ENCODE measurements at regions of chr5 and their contacts with region 1.

Region 1: DNA sequence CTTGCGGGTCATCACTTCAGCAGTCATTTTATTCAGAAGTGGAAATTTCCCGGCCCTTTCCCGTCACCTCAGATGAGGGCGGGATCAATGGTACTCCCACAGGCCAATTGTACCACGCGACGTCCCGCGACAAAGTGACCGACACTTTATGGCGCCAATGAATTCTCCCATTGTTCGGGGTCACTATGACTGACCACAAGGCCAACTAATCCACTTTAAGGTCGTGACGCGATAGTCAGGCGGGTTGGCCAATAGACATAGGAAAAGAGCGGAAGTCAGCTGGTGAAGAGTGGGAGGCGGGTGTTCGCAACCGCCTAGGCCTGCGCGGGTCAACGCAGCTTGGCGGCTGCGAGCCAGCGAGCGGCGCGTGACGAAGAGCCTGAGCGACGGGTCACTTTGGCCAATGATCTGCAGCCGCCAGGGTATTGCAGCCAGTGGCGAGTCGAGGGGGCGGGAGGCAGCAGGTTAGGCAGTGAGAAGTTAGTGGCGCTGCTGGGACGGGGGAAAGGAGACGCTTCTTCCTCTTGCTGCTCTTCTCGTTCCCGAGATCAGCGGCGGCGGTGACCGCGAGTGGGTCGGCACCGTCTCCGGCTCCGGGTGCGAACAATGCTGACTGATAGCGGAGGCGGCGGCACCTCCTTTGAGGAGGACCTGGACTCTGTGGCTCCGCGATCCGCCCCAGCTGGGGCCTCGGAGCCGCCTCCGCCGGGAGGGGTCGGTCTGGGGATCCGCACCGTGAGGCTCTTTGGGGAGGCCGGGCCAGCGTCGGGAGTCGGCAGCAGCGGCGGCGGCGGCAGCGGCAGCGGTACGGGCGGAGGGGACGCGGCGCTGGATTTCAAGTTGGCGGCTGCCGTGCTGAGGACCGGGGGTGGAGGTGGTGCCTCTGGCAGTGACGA is at the start of gene ANKHD1:
- DNase-seq: peak; percentile 90

Region 2: DNA sequence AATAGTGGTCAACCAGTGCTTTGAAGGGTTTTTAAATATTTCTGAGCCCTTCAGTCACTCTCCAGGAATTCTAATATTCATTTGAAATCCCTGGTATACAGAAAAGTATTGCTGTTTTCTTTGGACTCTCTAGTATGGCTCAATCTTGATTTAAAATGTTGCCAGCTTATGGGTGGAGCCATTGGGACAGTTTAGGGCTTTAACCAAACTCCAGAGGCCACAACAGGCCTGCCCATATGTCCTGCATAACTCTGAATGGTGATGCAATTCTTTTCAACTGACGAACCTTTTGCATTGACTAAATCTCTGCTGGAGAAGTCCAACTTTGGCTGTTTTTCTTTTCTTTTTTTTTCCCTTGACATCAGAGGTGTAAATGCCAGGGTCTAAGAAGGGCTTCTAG is 10.3 kb before region 1 on chr5:
- CTCF ChIA-PET with region 1: interaction called, 3 read pairs
- POLR2A ChIA-PET with region 1: interaction called, 24 read pairs
- DNase-seq: no peak

Region 3: GRCh38 chr5:140557136-140557805 is 155.7 kb after region 1 on chr5 and contains the start of gene SRA1:
- CTCF ChIA-PET with region 1: no interaction called
- POLR2A ChIA-PET with region 1: interaction called, 14 read pairs
- DNase-seq: peak; percentile 92

Region 4: DNA sequence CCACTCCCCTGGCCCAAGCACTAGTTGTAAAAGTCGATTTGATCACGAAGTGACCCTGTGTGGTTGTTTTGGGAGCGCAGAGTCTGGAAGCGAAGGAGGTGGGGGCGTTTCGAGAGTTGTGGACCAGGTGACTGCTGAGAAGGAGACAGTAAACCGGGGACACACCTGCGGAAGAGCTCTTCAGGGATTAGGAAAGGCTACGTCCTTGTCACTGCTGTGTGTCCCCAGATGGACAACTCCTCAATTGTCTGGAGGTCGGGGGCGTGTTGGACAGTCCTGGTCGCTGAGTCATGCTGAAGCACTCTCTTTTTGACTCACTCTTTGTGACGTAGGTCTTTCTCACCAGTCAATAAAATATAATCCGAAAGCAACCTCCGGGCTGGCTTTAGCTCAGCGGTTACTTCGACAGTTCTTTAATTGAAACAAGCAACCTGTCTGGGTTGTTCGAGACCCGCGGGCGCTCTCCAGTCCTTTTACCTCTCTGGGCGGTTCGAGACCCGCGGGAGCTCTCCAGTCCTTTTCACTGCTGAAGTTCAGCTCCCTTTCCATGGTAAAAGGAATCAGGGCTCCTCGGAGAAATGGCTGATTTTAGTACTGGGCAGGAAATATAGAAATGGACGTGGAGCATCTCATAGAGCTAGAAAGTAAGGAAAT is 309.4 kb after region 1 on chr5:
- CTCF ChIA-PET with region 1: no interaction called
- POLR2A ChIA-PET with region 1: interaction called, 13 read pairs
- DNase-seq: peak; percentile 73

Region 5: GRCh38 chr5:140718241-140718580 is 316.6 kb after region 1 on chr5:
- CTCF ChIA-PET with region 1: no interaction called
- POLR2A ChIA-PET with region 1: interaction called, 13 read pairs
- DNase-seq: no peak